ENCODE measurements at regions of chr12 and their contacts with region 1.

Region 1: GRCh38 chr12:22670762-22671161 is 45.8 kb downstream of the ETNK1 start:
- DNase-seq: no peak
- H3K4me3 Mint-ChIP-seq: no peak overlapping the region
- H3K27ac Mint-ChIP-seq: no peak overlapping the region
- H3K4me1 Mint-ChIP-seq: no peaks in the 10 kb centered on the region
- H3K27me3 Mint-ChIP-seq: no peaks in the 10 kb centered on the region

Region 2: GRCh38 chr12:22529281-22530060 is 141.3 kb before region 1 on chr12:
- CTCF ChIA-PET with region 1: interaction called, 9 read pairs
- POLR2A ChIA-PET with region 1: no interaction called
- intact Hi-C with region 1: loop called (anchors 1 kb)
- DNase-seq: no peak
- H3K4me3 Mint-ChIP-seq: no peak overlapping the region
- H3K27ac Mint-ChIP-seq: no peak overlapping the region
- H3K4me1 Mint-ChIP-seq: peaks cover 4% of the 10 kb centered on the region
- H3K27me3 Mint-ChIP-seq: no peaks in the 10 kb centered on the region

Region 3: DNA sequence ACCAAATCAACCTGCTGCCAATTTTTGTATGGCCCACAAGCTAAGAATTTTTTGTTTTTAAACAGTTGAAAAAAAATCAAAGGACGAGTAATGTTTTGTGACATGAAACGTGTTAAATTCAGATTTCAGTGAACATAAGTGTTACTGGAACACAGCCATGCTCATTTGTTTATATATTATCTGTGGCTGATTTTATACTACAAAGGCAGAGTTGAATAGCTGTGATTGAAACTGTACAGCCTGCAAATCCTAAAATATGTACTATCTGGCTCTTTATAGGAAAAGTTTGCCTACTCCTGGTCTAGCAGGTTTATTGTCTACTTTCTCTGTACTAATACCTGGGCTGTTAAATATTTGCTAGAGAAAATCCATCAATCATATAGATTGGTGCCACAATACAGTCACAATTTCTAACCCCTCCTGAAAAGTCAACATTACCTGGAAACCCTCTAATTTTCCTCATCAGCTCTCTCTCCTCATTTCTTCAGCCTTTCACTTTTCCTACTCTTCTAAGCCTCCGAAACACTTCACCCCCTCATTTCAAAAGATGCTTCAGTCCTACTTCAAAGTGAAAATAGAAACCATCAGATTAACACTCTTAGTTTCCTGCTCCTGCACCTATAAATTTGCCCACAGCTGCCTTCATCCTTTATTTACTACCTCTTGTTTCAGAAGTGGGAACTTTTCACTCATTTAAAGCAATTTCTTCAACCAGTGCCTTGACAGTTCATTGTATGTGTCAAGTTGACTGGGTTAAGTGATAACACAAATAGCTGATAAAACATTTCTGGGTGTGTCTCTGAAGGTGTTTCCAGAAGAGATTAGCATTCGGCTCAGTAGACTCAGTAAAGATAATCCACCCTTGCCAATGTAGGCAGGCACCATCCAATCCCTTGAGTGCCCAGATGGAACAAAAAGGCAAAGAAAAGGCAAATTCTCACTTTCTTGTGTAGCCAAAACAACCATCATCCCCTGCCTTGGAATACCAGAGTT is 108.4 kb before region 1 on chr12:
- CTCF ChIA-PET with region 1: no interaction called
- POLR2A ChIA-PET with region 1: no interaction called
- intact Hi-C with region 1: no loop called
- DNase-seq: no peak
- H3K4me3 Mint-ChIP-seq: no peak overlapping the region
- H3K27ac Mint-ChIP-seq: no peak overlapping the region
- H3K4me1 Mint-ChIP-seq: peaks cover 10% of the 10 kb centered on the region
- H3K27me3 Mint-ChIP-seq: peaks cover 8% of the 10 kb centered on the region

Region 4: DNA sequence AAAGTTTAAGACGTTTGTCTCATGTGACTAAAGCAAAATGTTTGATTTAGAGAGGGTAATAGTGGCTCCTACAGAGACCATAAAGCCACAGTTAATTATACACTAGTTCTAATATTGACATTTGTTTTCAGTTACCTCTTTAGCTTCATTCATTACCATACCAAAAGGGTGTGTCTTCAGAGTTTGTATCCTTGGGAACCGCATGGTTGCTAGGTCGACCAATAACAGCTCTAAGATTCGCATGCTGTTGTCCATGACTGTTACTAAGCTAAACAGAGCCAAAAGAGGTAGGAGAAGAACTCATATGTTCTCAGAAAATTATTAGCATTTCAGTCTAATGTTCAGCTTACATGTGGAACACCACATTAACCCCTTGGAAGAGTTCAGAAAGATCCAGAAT is 81.9 kb before region 1 on chr12:
- CTCF ChIA-PET with region 1: no interaction called
- POLR2A ChIA-PET with region 1: no interaction called
- intact Hi-C with region 1: no loop called
- DNase-seq: no peak
- H3K4me3 Mint-ChIP-seq: no peak overlapping the region
- H3K27ac Mint-ChIP-seq: no peak overlapping the region
- H3K4me1 Mint-ChIP-seq: peaks cover 2% of the 10 kb centered on the region
- H3K27me3 Mint-ChIP-seq: no peaks in the 10 kb centered on the region

Region 5: GRCh38 chr12:22684140-22685118 is 13.7 kb after region 1 on chr12:
- CTCF ChIA-PET with region 1: interaction called, 31 read pairs
- POLR2A ChIA-PET with region 1: no interaction called
- intact Hi-C with region 1: no loop called
- DNase-seq: no peak
- H3K4me3 Mint-ChIP-seq: no peak overlapping the region
- H3K27ac Mint-ChIP-seq: no peak overlapping the region
- H3K4me1 Mint-ChIP-seq: peaks cover 15% of the 10 kb centered on the region
- H3K27me3 Mint-ChIP-seq: no peaks in the 10 kb centered on the region